Activated T-helper 2 cell treated with anti-CD3 and anti-CD28 coated beads, Interferon-gamma antibody, Interleukin-2, Interleukin-4, amounts not matched to agents 10 μg/mL and 5 μg/mL and 100 μg/mL, durations not matched to agents 14 hours and 24 hours and 36 hours (primary cell): ENCODE measurements at regions of chr5 and their contacts with region 1.

Region 1: DNA sequence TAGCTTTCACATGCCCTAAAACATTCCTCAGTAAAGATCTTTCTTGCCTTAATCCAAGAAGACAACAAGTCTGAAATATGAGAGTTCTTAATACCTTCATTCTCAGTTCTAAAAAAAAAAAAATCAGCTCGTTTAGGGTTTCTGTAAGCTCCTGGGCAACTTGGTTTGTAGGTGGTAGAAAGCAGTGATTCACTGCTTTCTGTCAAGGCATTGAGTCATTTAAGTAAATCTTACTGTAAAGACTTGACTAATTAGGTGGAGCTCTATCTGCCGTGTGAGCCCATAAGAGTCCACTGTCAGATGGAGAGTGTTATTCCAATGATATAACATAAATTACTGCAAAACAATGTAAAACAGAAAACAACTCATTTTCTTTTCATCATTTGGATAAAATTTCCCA is 56.1 kb upstream of the MAST4 start:
- DNase-seq: no peak
- H3K4me3 Mint-ChIP-seq: no peak overlapping the region
- H3K27ac Mint-ChIP-seq: no peak overlapping the region
- H3K4me1 Mint-ChIP-seq: no peaks in the 10 kb centered on the region
- H3K27me3 Mint-ChIP-seq: peaks cover 3% of the 10 kb centered on the region

Region 2: DNA sequence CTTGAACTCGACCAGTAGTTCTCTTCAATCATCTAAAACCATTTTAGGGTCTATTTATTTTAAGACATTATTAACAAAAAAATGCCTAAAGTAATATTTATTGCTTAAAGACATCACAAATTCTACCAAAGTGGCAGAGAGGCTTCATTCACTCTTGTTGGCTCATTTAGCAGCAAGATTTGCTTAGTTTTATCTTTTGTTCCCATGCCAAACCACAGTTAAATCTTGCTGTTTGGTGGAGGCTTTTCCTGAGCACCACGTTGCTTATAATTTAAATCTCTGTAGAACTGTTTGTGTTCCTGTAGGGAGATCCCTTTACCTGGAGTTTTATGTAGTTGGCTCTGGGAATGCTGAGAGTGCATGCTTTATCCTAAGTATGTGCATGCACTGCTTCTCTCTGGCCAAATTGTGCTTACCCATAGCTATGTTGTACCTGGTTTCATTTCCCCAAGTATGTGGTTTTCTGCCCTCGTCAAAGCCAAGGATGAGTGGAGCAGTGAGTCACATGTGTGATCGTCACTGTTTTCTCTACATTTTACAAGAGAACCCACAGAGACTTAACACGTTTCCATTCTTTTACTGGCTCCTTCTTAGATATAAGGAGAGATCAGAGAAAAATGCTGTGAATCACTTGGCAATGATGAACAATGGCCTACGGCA is 14.0 kb after region 1 on chr5:
- intact Hi-C with region 1: loop called (anchors 1 kb)
- DNase-seq: peak; percentile 10
- H3K4me3 Mint-ChIP-seq: no peak overlapping the region
- H3K27ac Mint-ChIP-seq: peak overlapping the region; percentile 36
- H3K4me1 Mint-ChIP-seq: peaks cover 22% of the 10 kb centered on the region
- H3K27me3 Mint-ChIP-seq: peaks cover 4% of the 10 kb centered on the region